Activated CD8-positive, alpha-beta T cell treated with anti-CD3 and anti-CD28 coated beads, Interleukin-2, amount 10 ng/mL, durations not matched to agents 7 days and 5 days (primary cell): ENCODE measurements at regions of chr7 and their contacts with region 1.

Region 1: GRCh38 chr7:11212080-11212711 is 238.5 kb downstream of the PHF14 start:
- DNase-seq: peak; percentile 65
- ATAC-seq: peak; percentile 75
- H3K4me3 Mint-ChIP-seq: no peak overlapping the region
- H3K27ac Mint-ChIP-seq: no peak overlapping the region
- H3K4me1 Mint-ChIP-seq: no peaks in the 10 kb centered on the region
- H3K27me3 Mint-ChIP-seq: peaks cover 4% of the 10 kb centered on the region

Region 2: GRCh38 chr7:11228515-11228914 is 16.3 kb after region 1 on chr7:
- CTCF ChIA-PET with region 1: interaction called, 19 read pairs
- POLR2A ChIA-PET with region 1: no interaction called
- DNase-seq: no peak
- ATAC-seq: no peak
- H3K4me3 Mint-ChIP-seq: no peak overlapping the region
- H3K27ac Mint-ChIP-seq: no peak overlapping the region
- H3K4me1 Mint-ChIP-seq: no peaks in the 10 kb centered on the region
- H3K27me3 Mint-ChIP-seq: peaks cover 7% of the 10 kb centered on the region